ENCODE measurements at regions of chr9 and their contacts with region 1.

Region 1: GRCh38 chr9:21455320-21455719 is 15.1 kb downstream of the IFNA1 start:
- DNase-seq: peak; percentile 22
- H3K4me3 ChIP-seq: no peak overlapping the region
- H3K27ac ChIP-seq: no peak overlapping the region
- H3K4me1 ChIP-seq: no peaks in the 10 kb centered on the region
- CTCF ChIP-seq: peak; percentile 71

Region 2: DNA sequence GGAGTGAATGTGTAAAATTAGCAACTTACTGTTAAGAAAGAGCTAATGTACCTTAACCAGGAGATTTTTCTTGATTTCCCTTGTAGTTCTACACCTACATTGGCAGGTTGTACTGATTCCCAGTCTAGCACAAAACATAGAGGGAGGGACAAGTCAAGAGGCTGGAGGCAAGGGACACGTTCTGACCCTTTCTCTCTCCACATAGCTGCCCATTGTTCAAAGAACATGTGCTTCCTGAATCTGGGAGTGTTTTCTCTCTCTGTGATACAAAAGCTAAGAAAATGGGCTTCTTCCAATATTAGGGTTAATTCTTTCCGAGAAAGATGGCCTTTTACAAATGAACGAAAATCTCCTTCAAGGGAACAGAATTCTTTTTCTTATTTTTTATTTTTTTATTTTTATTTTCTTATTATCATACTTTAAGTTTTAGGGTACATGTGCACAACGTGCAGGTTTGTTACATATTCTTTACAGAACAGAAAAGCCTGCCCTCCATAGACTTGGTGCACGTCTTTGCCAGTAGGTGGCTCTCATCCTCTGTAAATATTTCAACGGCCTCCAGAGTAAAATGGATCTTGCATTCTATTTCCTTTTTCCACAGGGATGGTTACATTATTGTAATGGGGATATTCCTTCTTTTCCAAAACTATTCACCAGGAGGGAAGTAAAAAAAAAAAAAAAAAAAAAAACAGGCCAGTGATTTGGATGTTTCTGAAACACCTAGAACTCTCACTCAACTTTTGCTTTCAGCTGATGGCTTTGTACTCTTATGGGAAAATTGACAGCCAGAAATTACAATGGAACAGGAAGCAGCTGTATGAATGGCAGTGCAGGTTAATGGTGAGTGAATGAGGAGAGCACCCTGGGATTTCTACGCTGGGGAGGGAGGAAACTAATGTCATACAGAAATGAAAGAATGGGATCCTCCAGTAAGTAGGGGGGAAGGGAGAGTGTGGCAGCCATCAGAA is 137.1 kb before region 1 on chr9:
- CTCF ChIA-PET with region 1: no interaction called
- POLR2A ChIA-PET with region 1: no interaction called
- intact Hi-C with region 1: loop called (anchors 5 kb)
- DNase-seq: peak; percentile 54
- H3K4me3 ChIP-seq: no peak overlapping the region
- H3K27ac ChIP-seq: no peak overlapping the region
- H3K4me1 ChIP-seq: no peaks in the 10 kb centered on the region
- CTCF ChIP-seq: peak; percentile 84

Region 3: DNA sequence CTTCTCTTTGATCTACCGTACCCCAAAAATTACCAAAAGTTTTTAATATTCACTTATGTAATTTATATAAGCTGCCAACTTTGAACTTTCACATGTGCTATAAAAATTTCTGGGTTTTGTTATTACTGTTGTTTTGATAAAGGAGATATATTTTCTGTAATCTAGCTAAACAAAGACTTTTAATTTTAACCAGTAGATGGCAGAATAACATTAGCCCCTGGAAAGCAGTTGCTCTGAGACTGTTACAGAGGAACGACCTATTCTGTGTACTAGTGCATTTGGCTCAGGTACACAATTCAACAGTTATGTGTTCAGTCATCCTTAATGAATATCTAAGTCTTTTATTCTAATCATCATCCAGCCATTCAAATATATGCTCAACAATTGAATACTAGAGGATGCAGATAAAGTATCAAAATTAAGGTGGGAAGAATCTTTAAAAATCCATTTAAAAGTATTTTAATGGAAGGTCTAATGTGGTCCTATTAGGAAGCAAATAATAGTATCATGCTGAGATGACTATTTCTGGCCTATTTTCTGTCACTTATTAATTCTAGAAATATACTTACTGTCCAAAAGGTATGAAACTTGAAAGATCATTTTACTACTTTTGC is 128.7 kb before region 1 on chr9:
- CTCF ChIA-PET with region 1: no interaction called
- POLR2A ChIA-PET with region 1: no interaction called
- intact Hi-C with region 1: loop called (anchors 2 kb)
- DNase-seq: peak; percentile 67
- H3K4me3 ChIP-seq: no peak overlapping the region
- H3K27ac ChIP-seq: no peak overlapping the region
- H3K4me1 ChIP-seq: peaks cover 8% of the 10 kb centered on the region
- CTCF ChIP-seq: peak; percentile 92

Region 4: DNA sequence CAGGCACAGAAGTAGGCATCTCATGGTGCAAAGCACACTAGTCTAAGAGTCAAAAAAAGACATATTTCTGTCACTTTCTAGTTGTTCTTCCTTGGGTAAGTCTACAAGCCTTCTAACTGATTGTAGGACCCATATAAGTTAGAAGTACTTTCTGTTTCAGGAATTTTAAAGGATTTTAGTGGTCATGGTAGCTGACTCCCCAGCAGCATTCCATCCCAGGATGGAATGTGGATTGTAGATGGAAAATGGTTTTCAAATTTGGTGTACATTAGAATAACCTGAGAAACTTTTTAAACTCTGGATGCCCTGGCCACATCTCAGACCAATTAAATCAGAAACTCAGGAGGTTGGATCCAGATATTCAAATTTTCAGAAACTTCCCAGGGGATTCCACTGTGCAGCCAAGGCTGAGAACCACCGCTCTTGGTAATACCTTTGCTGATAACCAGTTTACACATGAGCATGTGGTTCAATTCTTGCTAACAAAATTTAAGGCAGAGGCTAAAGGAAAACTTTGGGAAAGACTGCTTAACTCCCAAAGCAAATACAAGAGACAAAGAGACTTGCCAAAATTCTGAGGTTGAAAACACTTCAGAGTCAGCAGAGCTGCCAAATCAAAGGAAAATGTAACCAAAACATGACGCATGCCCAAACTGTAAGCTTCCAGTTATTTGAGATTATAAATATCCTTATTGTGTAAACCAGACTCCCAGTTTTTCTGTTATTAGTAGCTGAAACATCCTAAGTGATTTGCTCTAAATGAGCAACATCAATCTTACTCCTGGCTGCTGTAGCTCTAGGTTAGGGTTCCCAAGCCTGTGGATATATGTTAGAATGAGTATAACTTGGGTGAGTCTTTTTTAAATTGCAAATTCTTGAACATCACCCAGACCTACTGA is 201.7 kb after region 1 on chr9:
- CTCF ChIA-PET with region 1: no interaction called
- POLR2A ChIA-PET with region 1: no interaction called
- intact Hi-C with region 1: no loop called
- DNase-seq: no peak
- H3K4me3 ChIP-seq: no peak overlapping the region
- H3K27ac ChIP-seq: no peak overlapping the region
- H3K4me1 ChIP-seq: no peaks in the 10 kb centered on the region
- CTCF ChIP-seq: no peak

Measured in OCI-LY7 (cell line).